ENCODE measurements at regions of chr22 and their contacts with region 1.

Region 1: DNA sequence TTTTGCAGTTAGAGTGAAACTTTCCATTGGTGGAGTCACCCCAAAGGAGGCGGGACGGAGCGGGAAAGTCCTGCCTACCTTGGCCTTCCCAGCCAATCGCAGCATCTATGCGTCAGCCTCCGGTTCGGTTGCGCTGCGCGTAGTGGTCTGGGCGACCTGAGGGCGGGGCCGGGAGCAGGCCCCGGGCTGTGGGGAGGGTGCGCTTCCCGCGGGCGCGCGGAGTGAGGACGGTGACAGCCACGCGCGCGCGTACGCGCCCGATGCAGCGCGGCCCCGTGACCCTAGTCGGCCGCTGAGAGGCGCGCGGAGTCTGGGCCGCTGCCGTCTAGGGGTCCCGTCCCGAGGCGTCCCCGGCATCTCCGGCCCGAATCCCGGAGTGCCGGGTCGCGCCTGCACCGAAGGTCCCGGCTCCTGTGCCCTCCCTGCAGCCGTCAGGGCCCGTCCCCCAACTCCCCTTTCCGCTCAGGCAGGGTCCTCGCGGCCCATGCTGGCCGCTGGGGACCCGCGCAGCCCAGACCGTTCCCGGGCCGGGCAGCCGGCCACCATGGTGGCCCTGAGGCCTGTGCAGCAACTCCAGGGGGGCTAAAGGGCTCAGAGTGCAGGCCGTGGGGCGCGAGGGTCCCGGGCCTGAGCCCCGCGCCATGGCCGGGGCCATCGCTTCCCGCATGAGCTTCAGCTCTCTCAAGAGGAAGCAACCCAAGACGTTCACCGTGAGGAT is at the start of gene NF2:
- DNase-seq: peak; percentile 98
- H3K4me3 Mint-ChIP-seq: peak within 1 kb of the TSS; percentile 95
- H3K27ac Mint-ChIP-seq: peak within 1 kb of the TSS; percentile 80
- H3K4me1 Mint-ChIP-seq: peaks cover 24% of the 10 kb centered on the region
- H3K27me3 Mint-ChIP-seq: no peaks in the 10 kb centered on the region
- CTCF ChIP-seq: no peak
- total RNA-seq, gene NF2: 117 and 132 TPM in 2 replicates

Region 2: DNA sequence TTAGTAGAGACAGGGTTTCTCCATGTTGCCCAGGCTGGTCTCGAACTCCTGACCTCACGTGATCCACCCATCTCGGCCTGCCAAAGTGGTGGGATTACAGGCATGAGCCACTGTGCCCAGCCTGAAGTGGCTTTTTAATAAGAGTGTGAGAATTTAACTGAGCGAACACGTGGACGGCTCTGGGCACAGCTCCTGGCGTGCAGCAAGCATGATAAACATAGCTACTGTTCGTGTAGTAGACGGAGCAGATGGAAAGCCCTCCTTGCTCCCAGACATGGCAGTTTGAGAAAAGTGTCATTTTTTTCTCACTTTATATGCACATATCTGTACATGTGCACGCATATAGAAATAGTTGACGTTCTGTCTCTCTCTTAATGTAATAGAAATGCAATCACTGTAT is 390.8 kb before region 1 on chr22:
- CTCF ChIA-PET with region 1: interaction called, 11 read pairs
- intact Hi-C with region 1: no loop called
- DNase-seq: no peak
- H3K4me3 Mint-ChIP-seq: no peak overlapping the region
- H3K27ac Mint-ChIP-seq: no peak overlapping the region
- H3K4me1 Mint-ChIP-seq: no peaks in the 10 kb centered on the region
- H3K27me3 Mint-ChIP-seq: peaks cover 90% of the 10 kb centered on the region
- CTCF ChIP-seq: no peak

Region 3: DNA sequence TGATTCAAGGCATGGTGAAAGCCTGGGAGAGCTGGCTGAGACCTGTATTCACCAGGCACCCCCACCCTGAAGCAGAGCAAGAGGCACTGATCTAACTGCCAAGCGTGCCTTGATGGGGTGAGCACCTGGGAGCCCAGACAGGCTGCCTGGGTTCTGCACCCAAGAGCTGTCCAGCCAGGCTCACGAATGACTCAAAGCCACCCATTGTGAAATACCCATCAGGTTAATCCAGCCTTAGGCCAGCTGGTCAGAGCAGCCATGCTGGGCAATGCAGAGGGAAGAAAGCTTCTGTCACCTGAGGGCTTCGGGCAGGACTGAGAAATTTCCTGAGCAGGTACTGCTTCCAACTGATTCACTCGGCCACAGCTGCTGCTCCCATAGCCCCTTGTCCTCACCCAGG is 72.1 kb before region 1 on chr22:
- CTCF ChIA-PET with region 1: no interaction called
- intact Hi-C with region 1: no loop called
- DNase-seq: no peak
- H3K4me3 Mint-ChIP-seq: no peak overlapping the region
- H3K27ac Mint-ChIP-seq: no peak overlapping the region
- H3K4me1 Mint-ChIP-seq: no peaks in the 10 kb centered on the region
- H3K27me3 Mint-ChIP-seq: no peaks in the 10 kb centered on the region
- CTCF ChIP-seq: no peak

Region 4: GRCh38 chr22:29617922-29618629 is 14.6 kb after region 1 on chr22:
- CTCF ChIA-PET with region 1: interaction called, 4 read pairs
- intact Hi-C with region 1: loop called (anchors 1 kb)
- DNase-seq: peak; percentile 59
- H3K4me3 Mint-ChIP-seq: peak overlapping the region; percentile 34
- H3K27ac Mint-ChIP-seq: peak overlapping the region; percentile 90
- H3K4me1 Mint-ChIP-seq: peaks cover 58% of the 10 kb centered on the region
- H3K27me3 Mint-ChIP-seq: no peaks in the 10 kb centered on the region
- CTCF ChIP-seq: no peak